GM13976 (cell line): ENCODE measurements at regions of chr2 and their contacts with region 1.

Region 1: GRCh38 chr2:88669371-88670214 is 21.9 kb upstream of the RPIA start:
- DNase-seq: peak; percentile 56
- CTCF ChIP-seq: peak; percentile 65

Region 2: GRCh38 chr2:88055371-88056128 is 614.0 kb before region 1 on chr2 and contains the start of gene KRCC1:
- in situ Hi-C with region 1: loop called (anchors 25 kb)
- DNase-seq: peak; percentile 97
- CTCF ChIP-seq: no peak

Region 3: DNA sequence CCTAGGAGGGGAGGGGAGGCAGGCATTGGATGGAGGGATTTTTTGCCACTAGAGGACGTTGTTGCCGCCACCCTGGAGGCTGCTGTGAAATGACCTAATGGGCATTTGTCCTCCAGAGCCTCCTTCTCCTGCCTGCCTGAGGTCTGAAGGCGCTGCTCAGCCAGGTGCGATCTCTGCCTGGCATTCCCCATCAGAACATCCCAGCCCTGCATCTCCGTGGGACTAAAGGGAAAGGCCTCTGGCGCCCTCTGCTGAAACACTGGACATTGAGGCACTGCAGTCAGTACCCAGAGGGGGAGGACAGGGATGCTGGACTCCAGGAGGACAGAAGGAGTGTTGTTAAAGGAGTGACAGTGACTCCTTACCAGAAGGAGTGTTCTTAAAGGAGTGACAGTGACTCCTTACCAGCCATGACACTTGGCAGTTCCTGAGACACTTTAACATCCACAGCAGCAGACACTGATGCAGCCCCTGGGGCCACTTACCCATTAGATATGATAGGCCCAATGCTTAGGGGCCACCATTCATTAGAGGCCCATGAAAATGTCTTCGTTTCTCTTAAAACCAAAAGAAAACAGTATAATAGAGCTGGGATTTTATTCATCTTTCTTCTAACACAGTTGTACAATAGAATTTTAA is 482.4 kb before region 1 on chr2:
- in situ Hi-C with region 1: loop called (anchors 25 kb)
- DNase-seq: peak; percentile 71
- CTCF ChIP-seq: peak; percentile 72

Region 4: GRCh38 chr2:88329815-88330603 is 339.6 kb before region 1 on chr2:
- in situ Hi-C with region 1: loop called (anchors 25 kb)
- DNase-seq: peak; percentile 47
- CTCF ChIP-seq: no peak

Region 5: GRCh38 chr2:88574445-88574844 is 95.1 kb before region 1 on chr2:
- in situ Hi-C with region 1: loop called (anchors 10 kb)
- DNase-seq: peak; percentile 13
- CTCF ChIP-seq: no peak

Region 6: GRCh38 chr2:88590998-88591613 is 78.5 kb before region 1 on chr2:
- in situ Hi-C with region 1: loop called (anchors 5 kb)
- DNase-seq: peak; percentile 36
- CTCF ChIP-seq: peak; percentile 56